ENCODE measurements at regions of chr14 and their contacts with region 1.

Region 1: GRCh38 chr14:24160850-24161804 is at the start of gene IRF9:
- DNase-seq: peak; percentile 98
- H3K4me3 Mint-ChIP-seq: peak within 1 kb of the TSS; percentile 93
- H3K27ac Mint-ChIP-seq: peak within 1 kb of the TSS; percentile 100
- H3K4me1 Mint-ChIP-seq: peaks cover 58% of the 10 kb centered on the region
- H3K27me3 Mint-ChIP-seq: no peaks in the 10 kb centered on the region
- total RNA-seq, gene IRF9: 285 to 286 TPM

Region 2: DNA sequence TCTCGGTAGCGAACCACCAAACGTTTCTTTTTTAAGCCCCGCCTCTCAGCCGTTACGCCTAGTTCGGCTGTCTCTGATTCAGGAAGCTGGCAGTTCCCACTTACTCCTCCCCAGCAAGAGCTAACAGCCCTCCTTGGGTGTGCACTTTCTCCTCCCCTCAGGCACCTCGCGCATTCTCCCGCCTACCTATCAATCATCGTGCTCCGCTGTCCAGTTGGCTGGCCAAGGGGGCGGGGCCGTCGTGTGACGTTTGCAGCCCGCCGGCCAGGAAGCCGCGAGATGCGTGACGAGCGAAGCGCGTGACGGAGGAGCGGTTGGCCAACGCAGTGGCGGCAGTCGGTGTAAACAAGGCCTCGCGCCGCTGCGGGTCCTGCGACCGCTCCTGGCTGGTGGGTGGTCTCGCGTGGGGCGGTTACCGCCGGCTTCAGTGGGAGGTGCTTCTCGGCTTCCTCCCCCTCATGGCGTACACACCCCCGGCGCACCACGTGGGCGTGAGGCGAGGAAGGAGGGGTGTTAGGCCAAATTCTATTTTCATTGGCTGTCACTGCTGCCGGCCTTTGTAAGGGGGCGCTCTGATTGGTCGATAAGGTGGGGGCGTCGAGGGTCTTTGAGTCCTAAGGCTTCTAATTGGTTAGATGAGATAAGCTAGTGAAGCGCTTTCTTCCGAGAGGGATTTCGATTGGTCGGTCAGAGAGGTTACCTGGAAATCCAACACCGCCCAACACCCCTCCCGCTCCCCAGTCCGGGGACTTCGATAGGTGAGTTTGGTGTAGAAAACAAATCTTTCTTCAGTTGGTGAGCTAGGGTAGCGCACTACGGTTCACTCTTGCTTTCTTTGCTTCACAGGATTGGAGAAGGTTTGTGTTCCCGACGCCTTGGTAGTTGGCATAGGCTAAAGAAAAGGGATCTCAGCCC is 46.3 kb before region 1 on chr14 and contains the starts of genes DCAF11 and NRL:
- CTCF ChIA-PET with region 1: interaction called, 33 read pairs
- POLR2A ChIA-PET with region 1: interaction called, 11 read pairs
- DNase-seq: peak; percentile 99
- H3K4me3 Mint-ChIP-seq: peak within 1 kb of the TSS; percentile 100
- H3K27ac Mint-ChIP-seq: peak within 1 kb of the TSS; percentile 99
- H3K4me1 Mint-ChIP-seq: peaks cover 51% of the 10 kb centered on the region
- H3K27me3 Mint-ChIP-seq: no peaks in the 10 kb centered on the region
- total RNA-seq, gene DCAF11: 106 to 116 TPM
- total RNA-seq, gene NRL: 3.1 to 3.3 TPM

Region 3: DNA sequence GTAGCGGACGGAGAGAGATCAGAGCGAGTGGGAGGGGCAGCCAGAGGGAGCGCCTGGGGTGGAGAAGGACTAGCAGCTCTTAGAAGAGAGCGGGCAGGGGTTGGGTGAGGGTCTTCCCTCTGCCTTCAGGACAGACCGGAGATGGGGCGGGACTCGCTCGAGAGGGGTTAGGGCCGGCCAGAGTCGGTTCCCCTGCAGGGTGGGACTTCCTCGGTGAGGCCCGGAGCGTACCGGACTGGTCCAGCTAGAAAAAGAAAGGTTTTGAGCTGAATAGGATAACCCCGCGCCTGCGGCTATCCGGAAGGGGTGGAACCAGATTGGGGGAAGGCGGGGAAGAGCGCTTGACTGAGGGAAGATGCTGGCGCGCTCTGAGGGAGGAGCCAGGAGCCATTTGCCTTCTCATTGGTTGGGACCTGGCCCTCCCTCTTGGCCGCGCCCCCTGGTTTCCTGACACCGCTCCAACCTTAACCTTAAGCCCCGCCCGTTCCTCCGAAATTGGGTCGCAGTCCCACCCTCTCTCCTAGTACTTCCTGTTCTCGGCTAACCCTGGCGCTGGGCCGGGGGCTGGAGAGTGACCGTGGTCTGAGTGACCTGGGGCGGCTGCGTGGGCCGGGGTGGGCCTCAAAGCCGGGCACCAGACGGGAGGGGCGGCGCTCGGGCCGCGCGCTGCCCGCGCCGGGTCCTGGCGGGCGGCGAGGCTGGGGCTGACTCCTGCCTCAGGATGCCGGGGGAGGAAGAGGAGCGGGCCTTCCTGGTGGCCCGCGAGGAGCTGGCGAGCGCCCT is 14.0 kb before region 1 on chr14 and contains the start of gene RNF31:
- CTCF ChIA-PET with region 1: interaction called, 69 read pairs
- POLR2A ChIA-PET with region 1: interaction called, 25 read pairs
- DNase-seq: peak; percentile 100
- H3K4me3 Mint-ChIP-seq: peak within 1 kb of the TSS; percentile 100
- H3K27ac Mint-ChIP-seq: peak within 1 kb of the TSS; percentile 99
- H3K4me1 Mint-ChIP-seq: peaks cover 68% of the 10 kb centered on the region
- H3K27me3 Mint-ChIP-seq: no peaks in the 10 kb centered on the region
- total RNA-seq, gene RNF31: 147 to 160 TPM

Region 4: DNA sequence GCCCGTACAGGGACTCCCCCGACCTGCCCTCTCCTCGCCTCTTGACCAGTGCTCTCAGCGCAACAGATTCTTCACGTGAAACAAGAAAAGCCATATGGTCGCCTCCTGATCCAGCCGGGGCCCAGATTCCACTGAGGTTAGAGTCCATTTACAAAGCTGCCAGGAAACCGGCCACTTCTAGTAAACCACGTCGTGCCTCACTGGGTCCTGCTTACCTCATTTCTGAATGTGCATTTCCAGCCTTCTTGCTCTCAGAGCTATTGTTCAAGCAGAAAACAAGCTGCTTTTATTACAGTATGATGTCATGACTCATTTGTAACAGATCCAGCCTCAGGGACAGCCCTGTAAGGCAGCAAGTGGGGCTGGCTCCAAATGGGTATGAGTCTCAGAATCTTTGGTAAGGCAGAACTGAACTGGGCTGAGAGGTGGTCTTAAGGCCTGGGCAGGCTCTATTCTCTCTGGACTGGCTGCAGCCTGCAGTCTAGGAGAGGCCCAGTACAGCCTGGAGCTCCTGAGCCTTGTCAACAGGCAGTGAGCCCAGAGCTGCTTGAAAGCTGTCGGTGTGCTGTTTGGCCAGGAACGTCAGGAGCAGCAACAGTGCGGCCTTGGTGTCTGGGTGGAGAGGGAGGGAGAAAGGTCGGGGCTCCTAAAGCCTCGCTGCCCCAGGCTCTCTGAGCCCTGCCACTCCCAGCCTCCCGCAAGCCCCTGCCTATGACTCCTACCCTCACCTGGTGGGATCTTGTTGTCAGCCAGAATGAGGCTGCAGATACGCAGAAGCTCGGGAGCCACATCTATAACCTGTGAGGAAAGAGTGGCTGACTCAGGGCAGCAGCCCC is 19.1 kb after region 1 on chr14:
- CTCF ChIA-PET with region 1: interaction called, 49 read pairs
- POLR2A ChIA-PET with region 1: no interaction called
- DNase-seq: no peak
- H3K4me3 Mint-ChIP-seq: no peak overlapping the region
- H3K27ac Mint-ChIP-seq: no peak overlapping the region
- H3K4me1 Mint-ChIP-seq: peaks cover 7% of the 10 kb centered on the region
- H3K27me3 Mint-ChIP-seq: no peaks in the 10 kb centered on the region

Region 5: DNA sequence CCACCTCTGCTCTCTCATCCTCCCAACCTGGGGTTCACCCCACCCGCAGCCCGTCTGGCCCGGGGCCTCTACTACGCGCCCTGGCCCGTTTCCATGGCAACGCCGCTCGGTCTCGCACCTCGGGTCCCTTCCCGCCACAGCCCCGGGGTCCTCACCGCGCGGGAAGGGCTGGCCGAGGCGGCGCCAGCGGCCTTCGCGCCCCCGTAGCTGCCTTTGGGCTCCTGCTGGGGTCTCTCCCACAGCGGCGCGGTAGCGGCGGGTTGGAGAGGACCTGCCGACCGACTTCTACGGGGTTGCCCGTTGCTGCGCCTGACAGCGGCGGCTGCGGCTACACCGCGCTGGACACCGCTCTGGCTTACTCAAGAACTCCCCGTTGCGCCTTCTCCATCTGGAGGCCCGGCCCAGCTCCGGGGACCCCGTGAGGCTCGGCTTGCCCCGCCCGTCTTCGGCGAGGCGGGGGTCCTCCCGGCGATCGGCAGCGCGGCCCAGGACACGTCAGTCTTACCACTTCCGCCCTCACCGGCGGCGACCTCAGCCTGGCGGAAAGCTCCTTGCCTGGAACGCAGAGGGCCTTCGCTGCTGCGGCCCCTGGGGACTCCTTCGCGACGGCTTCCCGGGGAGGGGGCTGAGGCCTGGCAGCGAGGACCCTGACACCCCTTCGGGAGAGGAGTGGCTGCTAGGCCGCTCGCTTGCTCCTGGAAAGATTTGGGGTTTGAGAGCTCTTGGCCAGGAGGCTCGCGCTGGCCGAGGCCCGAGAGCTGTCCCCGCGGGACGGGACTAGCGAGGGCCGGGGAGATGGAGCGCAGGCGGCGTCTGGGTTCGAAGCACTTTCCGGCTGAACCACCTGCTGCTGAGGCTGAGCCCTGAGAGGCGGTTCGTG is 34.3 kb after region 1 on chr14 and contains the start of gene TM9SF1:
- CTCF ChIA-PET with region 1: interaction called, 12 read pairs
- POLR2A ChIA-PET with region 1: interaction called, 4 read pairs
- DNase-seq: peak; percentile 91
- H3K4me3 Mint-ChIP-seq: peak within 1 kb of the TSS; percentile 98
- H3K27ac Mint-ChIP-seq: peak within 1 kb of the TSS; percentile 99
- H3K4me1 Mint-ChIP-seq: peaks cover 56% of the 10 kb centered on the region
- H3K27me3 Mint-ChIP-seq: no peaks in the 10 kb centered on the region
- total RNA-seq, gene TM9SF1: 28.6 to 33.2 TPM

Region 6: DNA sequence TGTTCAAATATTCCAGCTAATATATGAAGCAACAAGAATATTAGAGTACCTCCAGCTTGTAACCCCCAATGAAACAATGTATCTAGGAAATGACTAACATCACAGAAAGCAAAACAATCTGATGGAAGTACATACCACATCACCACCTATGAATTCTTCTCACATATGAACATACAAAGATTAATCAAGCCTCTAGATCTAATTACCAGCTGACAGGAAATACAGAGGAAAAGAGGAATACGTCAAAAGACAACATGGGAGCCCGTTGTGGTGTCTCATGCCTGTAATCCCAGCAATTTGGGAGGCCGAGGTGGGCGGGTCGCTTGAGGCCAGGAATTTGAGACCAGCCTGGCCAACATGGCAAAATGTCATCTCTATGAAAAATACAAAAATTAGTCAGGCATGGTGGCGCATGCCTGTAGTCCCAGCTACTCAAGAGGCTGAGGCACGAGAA is 63.5 kb after region 1 on chr14:
- CTCF ChIA-PET with region 1: no interaction called
- POLR2A ChIA-PET with region 1: no interaction called
- DNase-seq: no peak
- H3K4me3 Mint-ChIP-seq: no peak overlapping the region
- H3K27ac Mint-ChIP-seq: no peak overlapping the region
- H3K4me1 Mint-ChIP-seq: peaks cover 21% of the 10 kb centered on the region
- H3K27me3 Mint-ChIP-seq: no peaks in the 10 kb centered on the region

Region 7: GRCh38 chr14:24241829-24242443 is 80.8 kb after region 1 on chr14:
- CTCF ChIA-PET with region 1: interaction called, 12 read pairs
- POLR2A ChIA-PET with region 1: interaction called, 7 read pairs
- DNase-seq: peak; percentile 96
- H3K4me3 Mint-ChIP-seq: peak overlapping the region; percentile 95
- H3K27ac Mint-ChIP-seq: peak overlapping the region; percentile 100
- H3K4me1 Mint-ChIP-seq: peaks cover 58% of the 10 kb centered on the region
- H3K27me3 Mint-ChIP-seq: no peaks in the 10 kb centered on the region

Region 8: GRCh38 chr14:24978862-24979724 is 818.0 kb after region 1 on chr14:
- CTCF ChIA-PET with region 1: no interaction called
- POLR2A ChIA-PET with region 1: no interaction called
- DNase-seq: no peak
- H3K4me3 Mint-ChIP-seq: no peak overlapping the region
- H3K27ac Mint-ChIP-seq: no peak overlapping the region
- H3K4me1 Mint-ChIP-seq: no peaks in the 10 kb centered on the region
- H3K27me3 Mint-ChIP-seq: peaks cover 11% of the 10 kb centered on the region

Measured in activated CD4-positive, alpha-beta T cell treated with anti-CD3 and anti-CD28 coated beads, Interleukin-2, amount 10 ng/mL, durations not matched to agents 7 days and 5 days (primary cell).